H1 (cell line): ENCODE measurements at regions of chr17 and their contacts with region 1.

Region 1: DNA sequence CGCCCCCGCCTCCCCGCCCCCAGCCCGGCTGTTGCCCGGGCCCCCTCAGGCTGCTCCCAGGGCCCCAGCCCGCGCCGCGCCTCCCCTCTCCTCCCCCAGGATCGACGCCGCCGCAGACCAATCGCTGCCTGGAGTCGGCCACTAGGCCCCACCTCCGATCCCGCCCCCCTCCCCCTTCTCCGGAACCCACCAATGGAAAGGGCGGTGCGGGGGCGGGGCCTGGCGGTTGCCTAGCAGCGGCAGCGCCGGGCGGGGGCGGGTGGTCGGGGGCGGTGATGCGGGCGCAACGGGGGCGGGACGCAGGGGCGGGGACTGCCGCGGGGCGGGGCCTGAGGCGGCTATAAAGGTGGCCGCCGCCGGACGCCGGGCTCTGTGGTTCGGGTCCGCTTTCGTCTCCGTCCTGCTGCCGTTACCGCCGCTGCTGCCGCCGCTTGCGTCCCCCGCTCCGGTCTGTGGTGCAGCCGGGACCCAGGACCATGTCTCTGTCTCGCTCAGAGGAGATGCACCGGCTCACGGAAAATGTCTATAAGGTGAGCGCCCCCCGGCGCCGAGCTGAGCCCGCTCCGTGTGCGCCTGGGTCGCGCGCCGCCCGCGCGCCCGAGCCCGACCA is at the start of gene BAIAP2:
- DNase-seq: peak; percentile 77 to 97
- H3K4me3 ChIP-seq: peak within 1 kb of the TSS; percentile 57 to 97 (median 72)
- H3K27ac ChIP-seq: no peak within 1 kb of the TSS
- H3K4me1 ChIP-seq: peaks cover 0 to 19% (median 9%) of the 10 kb centered on the region in 4 experiments; a peak in 5 of 7 replicates
- H3K27me3 ChIP-seq: peaks cover 0 to 11% (median 5%) of the 10 kb centered on the region in 4 experiments; a peak in 5 of 7 replicates
- CTCF ChIP-seq: 0 out of 4 replicates have a peak, but pooled peaks of 1 of the 3 experiments have one; percentile 3
- EP300 ChIP-seq: no peak
- POLR2A ChIP-seq: peak in 1 of 2 experiments; percentile 98; a peak in 2 of 3 replicates
- RAD21 ChIP-seq: no peak; a peak in 1 of 4 replicates
- total RNA-seq, gene BAIAP2: 18.4 and 22.8 TPM in 2 replicates

Region 2: GRCh38 chr17:81018044-81018802 is 16.7 kb before region 1 on chr17:
- CTCF ChIA-PET with region 1: interaction called, 14 read pairs
- POLR2A ChIA-PET with region 1: interaction called, 41 read pairs
- DNase-seq: no peak
- H3K4me3 ChIP-seq: no peak overlapping the region
- H3K27ac ChIP-seq: no peak overlapping the region
- H3K4me1 ChIP-seq: peaks cover 0 to 3% (median under 1%) of the 10 kb centered on the region in 4 experiments; a peak in 4 of 7 replicates
- H3K27me3 ChIP-seq: no peaks in the 10 kb centered on the region
- CTCF ChIP-seq: no peak
- EP300 ChIP-seq: no peak
- POLR2A ChIP-seq: no peak
- RAD21 ChIP-seq: no peak

Region 3: DNA sequence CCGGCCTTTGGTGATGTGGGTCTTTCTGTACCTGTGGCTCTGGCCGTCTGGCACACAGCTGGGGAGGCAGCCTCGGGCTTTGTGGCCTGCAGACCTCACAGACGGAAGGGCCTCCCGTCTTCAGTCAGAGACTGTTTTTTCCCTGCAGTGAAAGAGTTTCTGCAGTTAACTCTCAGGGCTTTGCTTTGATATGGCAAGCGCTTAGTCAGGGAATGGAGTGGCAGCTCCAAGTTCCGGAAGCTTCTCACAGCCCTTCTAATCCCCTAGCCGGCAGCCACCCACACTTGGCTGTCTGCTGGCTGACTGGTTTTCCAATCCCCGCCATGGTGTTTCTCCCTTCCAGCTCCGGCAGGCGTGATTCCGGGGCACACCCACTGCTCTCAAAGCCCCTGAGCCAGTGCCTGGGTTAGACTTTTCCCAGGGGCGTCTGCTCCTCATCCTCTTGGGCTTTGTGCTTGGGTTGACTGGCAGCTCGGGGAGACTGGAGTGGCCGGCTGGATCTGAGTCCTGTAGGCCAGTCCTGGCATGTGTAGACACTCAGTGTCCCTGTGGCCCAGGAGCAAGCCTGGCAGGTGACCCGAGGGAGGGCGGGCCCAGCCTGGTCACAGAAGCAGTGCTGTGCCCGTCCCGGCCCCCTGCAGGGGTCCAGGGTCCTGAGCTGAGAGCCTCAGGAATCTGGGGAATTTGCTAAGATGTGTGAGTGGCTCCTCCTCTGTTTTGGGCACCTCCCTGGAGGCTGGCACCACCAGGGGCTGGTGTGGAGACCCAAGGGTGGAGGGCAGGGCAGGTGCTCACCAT is 30.0 kb after region 1 on chr17:
- CTCF ChIA-PET with region 1: interaction called, 7 read pairs
- POLR2A ChIA-PET with region 1: interaction called, 19 read pairs
- DNase-seq: no peak
- H3K4me3 ChIP-seq: no peak overlapping the region
- H3K27ac ChIP-seq: peak overlapping the region; percentile 8; the same call in 1 of the 2 replicates
- H3K4me1 ChIP-seq: peaks cover 0 to 12% (median 5%) of the 10 kb centered on the region in 4 experiments; a peak in 4 of 7 replicates
- H3K27me3 ChIP-seq: no peaks in the 10 kb centered on the region
- CTCF ChIP-seq: no peak
- EP300 ChIP-seq: no peak
- POLR2A ChIP-seq: no peak
- RAD21 ChIP-seq: no peak